Caco-2 (cell line): ENCODE measurements at regions of chr13 and their contacts with region 1.

Region 1: GRCh38 chr13:107205303-107206104 is 637.6 kb upstream of the ARGLU1 start:
- DNase-seq: peak; percentile 73 to 82
- H3K4me3 ChIP-seq: no peak overlapping the region
- H3K4me3 Mint-ChIP-seq: no peak overlapping the region
- H3K27ac Mint-ChIP-seq: no peak overlapping the region
- H3K4me1 ChIP-seq: no peaks in the 10 kb centered on the region
- H3K4me1 Mint-ChIP-seq: peaks cover 3% of the 10 kb centered on the region
- H3K27me3 ChIP-seq: 0 out of 2 replicates have a peak, but pooled peaks cover 2% of the 10 kb centered on the region
- H3K27me3 Mint-ChIP-seq: peaks cover 6% of the 10 kb centered on the region
- CTCF ChIP-seq: peak; percentile 98 to 99

Region 2: DNA sequence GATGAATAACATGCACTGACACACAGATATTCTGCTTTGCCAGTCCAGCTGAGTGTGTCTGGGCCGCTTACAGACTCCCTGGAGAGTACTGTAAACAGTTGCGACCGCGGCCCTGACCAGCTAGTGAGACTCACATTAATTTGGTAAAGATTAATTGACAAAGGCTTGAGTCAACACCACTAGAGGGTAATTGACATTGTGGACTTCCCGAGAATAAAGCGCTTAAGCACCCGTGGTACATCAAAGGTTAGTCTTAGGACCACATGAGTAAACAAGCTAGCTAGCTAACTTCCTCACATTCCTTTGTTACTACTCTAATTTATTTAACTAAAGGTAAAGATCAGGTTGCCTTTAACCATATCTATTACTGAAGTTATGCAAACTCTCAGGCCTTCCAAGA is 13.2 kb before region 1 on chr13:
- CTCF ChIA-PET with region 1: interaction called, 10 read pairs
- POLR2A ChIA-PET with region 1: no interaction called
- intact Hi-C with region 1: no loop called
- DNase-seq: peak; percentile 51 to 76
- H3K4me3 ChIP-seq: no peak overlapping the region
- H3K4me3 Mint-ChIP-seq: no peak overlapping the region
- H3K27ac Mint-ChIP-seq: no peak overlapping the region
- H3K4me1 ChIP-seq: peaks cover 14% of the 10 kb centered on the region
- H3K4me1 Mint-ChIP-seq: peaks cover 7% of the 10 kb centered on the region
- H3K27me3 ChIP-seq: no peaks in the 10 kb centered on the region
- H3K27me3 Mint-ChIP-seq: no peaks in the 10 kb centered on the region
- CTCF ChIP-seq: no peak

Region 3: DNA sequence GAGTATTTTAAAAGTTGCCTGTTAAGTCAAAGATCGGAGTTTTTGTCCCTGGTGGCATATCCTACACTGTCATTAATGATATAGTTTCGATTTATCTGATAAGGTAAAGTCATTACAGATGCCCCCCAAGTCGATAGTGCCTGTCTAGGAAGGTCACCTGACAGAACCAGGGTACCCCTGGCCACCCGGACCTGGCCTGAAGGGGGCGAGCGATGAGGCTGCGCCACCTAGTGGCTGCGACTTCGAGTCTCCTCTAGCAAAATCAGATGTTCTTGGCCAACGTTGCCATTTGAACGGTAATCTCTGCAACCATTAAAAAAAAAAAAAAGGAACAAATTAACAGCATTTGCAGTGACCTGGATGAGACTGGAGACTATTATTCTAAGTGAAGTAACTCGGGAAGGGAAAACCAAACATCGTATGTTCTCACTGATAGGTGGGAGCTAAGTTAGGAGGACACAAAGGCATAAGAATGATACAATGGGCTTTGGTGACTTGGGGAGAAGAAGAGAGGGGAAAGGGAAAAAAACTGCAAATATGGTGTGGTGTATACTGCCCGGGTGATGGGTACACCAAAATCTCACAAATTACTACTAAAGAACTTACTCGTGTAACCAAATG is 444.7 kb after region 1 on chr13:
- CTCF ChIA-PET with region 1: no interaction called
- POLR2A ChIA-PET with region 1: no interaction called
- intact Hi-C with region 1: loop called (anchors 1 kb)
- DNase-seq: peak; percentile 64 to 76
- H3K4me3 ChIP-seq: no peak overlapping the region
- H3K4me3 Mint-ChIP-seq: no peak overlapping the region
- H3K27ac Mint-ChIP-seq: no peak overlapping the region
- H3K4me1 ChIP-seq: no peaks in the 10 kb centered on the region
- H3K4me1 Mint-ChIP-seq: no peaks in the 10 kb centered on the region
- H3K27me3 ChIP-seq: no peaks in the 10 kb centered on the region
- H3K27me3 Mint-ChIP-seq: peaks cover 14% of the 10 kb centered on the region
- CTCF ChIP-seq: peak; percentile 92 to 99